Heart right ventricle (tissue), 16 donors: ENCODE measurements at regions of chr14 and their contacts with region 1.

Region 1: GRCh38 chr14:89416002-89416995 is 734 bp downstream of the FOXN3 start:
- DNase-seq: peak; percentile 99 to 100
- ATAC-seq: peak; percentile 85 to 94 (median 90)
- H3K4me3 ChIP-seq: peak overlapping the region; percentile 70 to 98 (median 92)
- H3K27ac ChIP-seq: peak overlapping the region; percentile 92 to 97 (median 96)
- H3K4me1 ChIP-seq: peaks cover 9 to 49% (median 33%) of the 10 kb centered on the region in 9 donors
- H3K27me3 ChIP-seq: no peaks in the 10 kb centered on the region
- CTCF ChIP-seq: no peak

Region 2: GRCh38 chr14:89178802-89179535 is 237.3 kb before region 1 on chr14:
- intact Hi-C with region 1: loop called in 5 of 10 experiments (anchors 5 to 10 kb)
- DNase-seq: no peak
- ATAC-seq: no peak
- H3K4me3 ChIP-seq: no peak overlapping the region
- H3K27ac ChIP-seq: peak overlapping the region in 1 of 10 donors; percentile 12
- H3K4me1 ChIP-seq: peaks cover 0 to 46% (median 23%) of the 10 kb centered on the region in 9 donors
- H3K27me3 ChIP-seq: no peaks in the 10 kb centered on the region
- CTCF ChIP-seq: no peak

Region 3: DNA sequence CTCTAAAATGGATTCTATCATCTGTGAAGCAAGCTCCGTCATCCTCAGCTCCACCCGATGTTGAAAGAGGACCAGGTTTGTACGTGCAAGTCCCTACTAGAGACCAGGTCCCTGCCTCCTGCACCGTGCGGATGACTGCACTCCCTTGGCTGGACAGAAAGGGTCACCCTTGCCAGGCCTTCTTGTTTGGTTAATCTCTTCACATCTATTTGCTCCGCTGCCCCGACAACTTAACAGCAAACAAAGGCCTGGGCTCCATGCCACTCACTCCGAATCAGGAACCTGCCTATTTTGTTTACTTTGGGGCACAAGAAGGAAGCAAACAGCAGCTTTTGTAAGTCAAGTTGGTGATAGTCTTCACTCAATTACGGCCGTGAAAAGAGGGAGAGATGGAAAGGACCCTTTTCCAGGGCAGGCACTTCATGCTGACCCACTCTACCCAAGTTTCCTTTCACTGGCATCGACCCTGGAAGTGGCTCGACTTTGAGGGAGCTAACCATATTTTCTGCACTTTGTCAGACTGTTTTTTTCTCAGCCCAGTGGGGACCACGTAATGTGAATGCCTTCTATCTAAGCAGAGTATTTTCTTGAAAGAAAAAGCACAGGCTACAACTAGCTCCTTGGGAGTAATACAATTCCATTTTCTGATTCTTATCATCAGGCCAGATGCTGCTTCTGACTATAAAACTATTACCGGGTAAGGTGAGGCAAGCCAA is 201.9 kb before region 1 on chr14:
- intact Hi-C with region 1: loop called in 2 of 10 experiments (anchors 10 kb)
- DNase-seq: peak; percentile 63 to 80
- ATAC-seq: peak; percentile 86 to 97 (median 94)
- H3K4me3 ChIP-seq: no peak overlapping the region
- H3K27ac ChIP-seq: peak overlapping the region in 6 of 10 donors; percentile 22 to 59 (median 45)
- H3K4me1 ChIP-seq: peaks cover 10 to 41% (median 29%) of the 10 kb centered on the region in 9 donors
- H3K27me3 ChIP-seq: no peaks in the 10 kb centered on the region
- CTCF ChIP-seq: peak in 5 of 9 donors; percentile 6 to 62 (median 49)

Region 4: GRCh38 chr14:89303457-89304435 is 112.6 kb before region 1 on chr14:
- intact Hi-C with region 1: loop called in 5 of 10 experiments (anchors 5 to 10 kb)
- DNase-seq: peak; percentile 29 to 80
- ATAC-seq: peak; percentile 71 to 89 (median 86)
- H3K4me3 ChIP-seq: peak overlapping the region in 8 of 10 donors; percentile 2 to 34 (median 29)
- H3K27ac ChIP-seq: peak overlapping the region; percentile 64 to 95 (median 88)
- H3K4me1 ChIP-seq: peaks cover 8 to 69% (median 52%) of the 10 kb centered on the region in 9 donors
- H3K27me3 ChIP-seq: no peaks in the 10 kb centered on the region
- CTCF ChIP-seq: no peak

Region 5: DNA sequence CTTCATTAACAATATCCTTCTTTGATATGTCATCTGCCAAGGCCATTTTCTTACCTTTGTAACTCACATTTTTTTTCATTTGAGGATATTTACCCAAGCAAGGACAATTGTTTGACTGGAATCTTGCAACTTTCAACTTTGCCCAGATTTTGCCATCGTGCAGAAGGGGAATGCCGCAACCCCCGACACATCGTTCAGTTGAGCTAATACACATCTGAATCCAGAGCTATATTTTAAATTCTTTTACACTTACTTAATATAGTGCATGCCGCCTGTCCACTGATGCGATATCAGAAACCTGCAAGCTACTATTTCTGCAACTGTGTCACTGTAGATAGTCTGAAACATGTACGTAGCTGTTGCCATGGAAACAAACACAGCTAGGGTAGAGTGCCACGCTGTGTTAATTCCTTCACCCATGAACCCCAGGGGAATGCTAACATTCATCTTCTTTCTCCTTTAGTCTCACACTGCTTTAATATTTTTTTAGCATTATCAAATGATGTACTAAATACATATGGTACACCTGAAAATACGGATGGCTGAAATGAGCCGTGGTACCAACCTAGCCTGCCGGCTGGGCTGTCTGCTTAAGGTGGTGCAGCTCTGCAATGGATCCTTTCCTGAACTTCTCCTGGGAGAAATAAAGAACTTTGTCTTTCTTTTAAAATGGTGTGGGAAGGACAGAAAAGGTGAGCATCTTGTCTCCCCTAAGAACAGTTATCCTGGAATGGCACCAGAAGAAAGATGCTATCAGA is 77.8 kb after region 1 on chr14:
- intact Hi-C with region 1: no loop called
- DNase-seq: no peak
- ATAC-seq: peak in 3 of 8 donors; percentile 46 to 65 (median 53)
- H3K4me3 ChIP-seq: peak overlapping the region in 2 of 10 donors; percentile 0 to 8
- H3K27ac ChIP-seq: no peak overlapping the region
- H3K4me1 ChIP-seq: peaks cover 0 to 37% (median 5%) of the 10 kb centered on the region in 9 donors
- H3K27me3 ChIP-seq: no peaks in the 10 kb centered on the region
- CTCF ChIP-seq: no peak

Region 6: GRCh38 chr14:89618811-89619551 is 202.7 kb after region 1 on chr14:
- intact Hi-C with region 1: loop called in 7 of 10 experiments (anchors 1 to 10 kb)
- DNase-seq: peak; percentile 51 to 79
- ATAC-seq: peak; percentile 75 to 97 (median 90)
- H3K4me3 ChIP-seq: peak overlapping the region; percentile 58 to 88 (median 79)
- H3K27ac ChIP-seq: peak overlapping the region; percentile 69 to 90 (median 82)
- H3K4me1 ChIP-seq: peaks cover 6 to 54% (median 39%) of the 10 kb centered on the region in 9 donors
- H3K27me3 ChIP-seq: no peaks in the 10 kb centered on the region
- CTCF ChIP-seq: no peak

Region 7: GRCh38 chr14:89767861-89768268 is 351.6 kb after region 1 on chr14:
- intact Hi-C with region 1: loop called in 5 of 10 experiments (anchors 10 kb)
- DNase-seq: peak in 1 of 2 donors; percentile 49
- ATAC-seq: peak in 6 of 8 donors; percentile 58 to 74 (median 66)
- H3K4me3 ChIP-seq: no peak overlapping the region
- H3K27ac ChIP-seq: no peak overlapping the region
- H3K4me1 ChIP-seq: peaks cover 0 to 25% (median 0%) of the 10 kb centered on the region in 9 donors
- H3K27me3 ChIP-seq: no peaks in the 10 kb centered on the region
- CTCF ChIP-seq: peak; percentile 43 to 75 (median 60)